ENCODE measurements at regions of chr17 and their contacts with region 1.

Region 1: GRCh38 chr17:33750943-33751701 is 458.0 kb upstream of the ASIC2 start:
- DNase-seq: peak; percentile 80
- ATAC-seq: peak; percentile 71
- H3K4me3 Mint-ChIP-seq: peak overlapping the region; percentile 59
- H3K27ac Mint-ChIP-seq: no peak overlapping the region
- H3K4me1 Mint-ChIP-seq: peaks cover 6% of the 10 kb centered on the region
- H3K27me3 Mint-ChIP-seq: peaks cover 12% of the 10 kb centered on the region

Region 2: GRCh38 chr17:33725675-33726271 is 25.3 kb before region 1 on chr17:
- CTCF ChIA-PET with region 1: interaction called, 11 read pairs
- POLR2A ChIA-PET with region 1: no interaction called
- DNase-seq: peak; percentile 32
- ATAC-seq: no peak
- H3K4me3 Mint-ChIP-seq: no peak overlapping the region
- H3K27ac Mint-ChIP-seq: no peak overlapping the region
- H3K4me1 Mint-ChIP-seq: no peaks in the 10 kb centered on the region
- H3K27me3 Mint-ChIP-seq: no peaks in the 10 kb centered on the region

Measured in activated CD8-positive, alpha-beta T cell treated with anti-CD3 and anti-CD28 coated beads, Interleukin-2, amount 10 ng/mL, durations not matched to agents 7 days and 5 days (primary cell).